ENCODE measurements at regions of chr11 and their contacts with region 1.

Region 1: DNA sequence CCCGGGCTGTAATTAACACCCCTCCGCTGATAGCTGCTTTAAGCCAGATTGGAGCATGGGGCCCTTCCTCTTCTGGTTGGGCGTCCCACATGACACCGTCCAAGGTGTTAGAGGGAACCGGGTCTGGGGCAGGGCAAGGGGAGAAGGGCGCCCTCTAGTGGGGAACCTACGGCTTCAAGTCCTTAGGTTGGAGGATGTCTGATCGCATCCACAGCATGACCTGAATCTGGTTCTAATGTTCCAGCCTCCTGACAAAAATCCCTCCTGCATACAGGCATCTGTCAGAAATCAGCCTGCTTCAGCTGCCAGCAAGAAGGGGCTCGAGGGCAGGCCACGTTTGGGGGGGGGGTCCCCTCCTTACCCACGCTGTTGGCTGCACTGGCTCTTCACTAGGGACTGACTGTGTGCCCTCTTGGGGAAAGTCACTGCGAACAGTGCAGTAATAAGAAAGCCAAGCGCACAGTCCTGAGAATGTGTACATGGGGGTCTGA is 94.2 kb upstream of the TBCEL start:
- DNase-seq: peak; percentile 68
- H3K4me3 ChIP-seq: no peak overlapping the region
- H3K27ac ChIP-seq: no peak overlapping the region
- H3K4me1 ChIP-seq: no peaks in the 10 kb centered on the region
- H3K27me3 ChIP-seq: no peaks in the 10 kb centered on the region
- CTCF ChIP-seq: peak; percentile 85

Region 2: GRCh38 chr11:121104312-121104762 is 174.6 kb after region 1 on chr11:
- CTCF ChIA-PET with region 1: no interaction called
- POLR2A ChIA-PET with region 1: no interaction called
- intact Hi-C with region 1: loop called (anchors 10 kb)
- DNase-seq: no peak
- H3K4me3 ChIP-seq: no peak overlapping the region
- H3K27ac ChIP-seq: no peak overlapping the region
- H3K4me1 ChIP-seq: no peaks in the 10 kb centered on the region
- H3K27me3 ChIP-seq: peaks cover 10% of the 10 kb centered on the region
- CTCF ChIP-seq: peak; percentile 48

Region 3: DNA sequence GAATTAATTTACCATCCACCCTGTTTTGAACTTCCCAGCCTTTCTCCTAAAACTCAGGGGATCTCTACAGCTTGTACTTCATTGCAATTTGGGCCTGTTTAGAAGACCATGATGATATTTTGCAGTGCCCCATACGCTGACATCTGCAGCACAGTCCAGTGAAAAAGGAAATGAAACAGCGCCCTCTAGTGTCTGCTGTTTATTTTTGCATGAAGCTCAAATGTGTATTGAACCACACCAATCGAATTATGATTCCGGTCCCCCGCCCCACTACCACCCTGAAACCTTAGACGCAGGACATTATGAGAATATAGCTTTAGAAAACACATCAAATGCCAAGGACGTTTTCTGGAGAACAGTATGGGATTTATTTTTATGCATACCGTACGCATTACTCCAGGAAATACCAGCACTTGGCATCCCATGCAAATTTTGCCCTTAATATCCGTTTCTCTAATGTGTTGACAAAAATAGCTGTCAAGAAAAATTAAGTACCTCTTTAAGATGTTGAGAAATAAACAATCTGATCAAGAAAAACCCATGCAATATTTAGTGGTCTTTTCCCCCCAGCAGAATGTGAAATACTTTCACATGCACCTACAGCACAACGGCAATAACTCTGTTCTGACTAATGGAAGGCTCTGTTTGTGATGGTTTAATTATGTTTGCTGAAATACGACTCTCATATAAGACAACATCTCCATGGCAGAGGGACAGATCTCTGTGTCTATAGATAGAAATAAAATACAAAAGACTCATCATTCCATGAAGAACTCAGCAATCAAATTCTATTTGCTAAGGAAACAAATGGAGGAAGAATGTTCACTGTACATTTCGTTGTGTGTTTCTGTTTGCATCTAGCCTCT is 265.3 kb after region 1 on chr11:
- CTCF ChIA-PET with region 1: interaction called, 4 read pairs
- POLR2A ChIA-PET with region 1: no interaction called
- intact Hi-C with region 1: loop called (anchors 5 kb)
- DNase-seq: peak; percentile 83
- H3K4me3 ChIP-seq: no peak overlapping the region
- H3K27ac ChIP-seq: no peak overlapping the region
- H3K4me1 ChIP-seq: no peaks in the 10 kb centered on the region
- H3K27me3 ChIP-seq: peaks cover 24% of the 10 kb centered on the region
- CTCF ChIP-seq: peak; percentile 91

Measured in A673 (cell line).